PC-9 (cell line): ENCODE measurements at regions of chr19 and their contacts with region 1.

Region 1: GRCh38 chr19:35533822-35534521 is 716 bp downstream of the GAPDHS start:
- DNase-seq: peak in 1 of 2 experiments; percentile 34
- H3K4me3 ChIP-seq: no peak overlapping the region
- H3K27ac ChIP-seq: no peak overlapping the region
- H3K4me1 ChIP-seq: 0 out of 2 replicates have a peak, but pooled peaks cover 5% of the 10 kb centered on the region
- H3K27me3 ChIP-seq: no peaks in the 10 kb centered on the region
- CTCF ChIP-seq: no peak

Region 2: DNA sequence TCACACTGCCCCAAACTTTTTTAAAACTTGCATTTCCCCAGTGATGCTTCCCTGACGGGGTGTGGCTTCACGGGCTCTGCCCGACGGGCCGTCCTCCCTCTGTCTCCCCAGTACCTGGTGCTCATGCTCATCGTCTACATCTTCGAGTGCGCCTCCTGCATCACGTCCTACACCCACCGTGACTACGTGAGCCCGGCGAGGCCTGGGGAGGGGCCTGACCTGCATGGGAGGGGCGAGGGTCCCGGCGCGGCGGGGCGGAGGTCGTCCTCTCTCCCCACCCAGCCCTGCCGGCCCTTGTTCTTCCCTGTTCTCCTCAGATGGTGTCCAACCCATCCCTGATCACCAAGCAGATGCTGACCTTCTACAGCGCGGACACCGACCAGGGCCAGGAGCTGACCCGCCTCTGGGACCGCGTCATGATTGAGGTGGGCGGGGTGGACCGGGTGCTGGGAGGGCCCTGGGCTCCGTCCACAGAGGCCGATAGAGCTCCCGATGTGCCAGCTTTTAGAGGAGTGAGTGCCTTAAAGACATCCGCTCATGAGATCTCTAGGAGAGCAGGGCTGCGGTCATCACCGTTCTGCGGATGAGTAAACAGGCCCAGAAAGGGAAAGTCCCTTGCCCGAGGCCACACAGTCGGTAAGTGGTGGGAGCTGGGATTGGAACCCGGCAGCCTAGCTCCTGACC is 139.3 kb after region 1 on chr19:
- CTCF ChIA-PET with region 1: interaction called, 11 read pairs
- POLR2A ChIA-PET with region 1: no interaction called
- intact Hi-C with region 1: no loop called
- DNase-seq: peak in 1 of 2 experiments; percentile 59
- H3K4me3 ChIP-seq: peak overlapping the region; percentile 43; the same call in 1 of the 2 replicates
- H3K27ac ChIP-seq: no peak overlapping the region
- H3K4me1 ChIP-seq: peaks cover 6% of the 10 kb centered on the region; the same call in 1 of the 2 replicates
- H3K27me3 ChIP-seq: peaks cover 19% of the 10 kb centered on the region
- CTCF ChIP-seq: no peak